GM12878 (cell line): ENCODE measurements at regions of chr9 and their contacts with region 1.

Region 1: DNA sequence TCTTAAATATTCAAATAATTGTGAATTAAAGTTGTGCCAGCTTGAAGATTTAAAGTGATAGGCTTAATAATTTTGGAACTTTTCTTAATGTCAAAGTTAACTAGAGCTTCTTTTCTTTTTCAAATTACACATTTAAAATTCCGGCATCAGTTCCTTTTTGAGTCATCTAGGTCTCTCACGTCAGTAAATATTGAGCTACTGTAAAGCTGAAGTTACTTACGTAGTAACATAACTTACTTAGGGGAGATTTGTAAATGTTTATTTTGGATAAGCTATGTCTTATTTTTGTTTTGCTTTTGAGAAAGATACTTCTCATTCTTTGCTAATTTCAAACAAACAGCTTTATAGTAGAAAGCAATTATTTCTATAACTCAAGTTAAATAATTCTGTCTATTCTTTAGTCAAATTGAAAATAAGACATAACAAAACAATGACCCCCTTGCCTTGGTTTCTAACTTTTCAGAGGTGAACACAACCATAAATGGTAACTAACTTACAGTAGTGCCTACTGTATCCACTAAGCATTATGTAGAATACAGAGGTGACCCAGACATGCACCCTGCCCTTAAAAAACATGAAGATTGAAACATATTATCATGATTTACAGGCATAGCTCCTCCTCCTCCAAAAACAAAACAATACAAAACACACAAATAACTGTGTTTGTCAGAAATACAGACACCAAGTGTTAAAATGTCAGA is 29.8 kb downstream of the CD274 start:
- DNase-seq: no peak
- ATAC-seq: peak; percentile 85
- H3K4me3 ChIP-seq: no peak overlapping the region
- H3K27ac ChIP-seq: peak overlapping the region; percentile 62
- H3K4me1 ChIP-seq: peaks cover 27% of the 10 kb centered on the region
- H3K27me3 ChIP-seq: no peaks in the 10 kb centered on the region
- CTCF ChIP-seq: no peak
- EP300 ChIP-seq: peak; percentile 37 to 47; a peak in 2 of 4 replicates
- POLR2A ChIP-seq: no peak
- RAD21 ChIP-seq: no peak

Region 2: DNA sequence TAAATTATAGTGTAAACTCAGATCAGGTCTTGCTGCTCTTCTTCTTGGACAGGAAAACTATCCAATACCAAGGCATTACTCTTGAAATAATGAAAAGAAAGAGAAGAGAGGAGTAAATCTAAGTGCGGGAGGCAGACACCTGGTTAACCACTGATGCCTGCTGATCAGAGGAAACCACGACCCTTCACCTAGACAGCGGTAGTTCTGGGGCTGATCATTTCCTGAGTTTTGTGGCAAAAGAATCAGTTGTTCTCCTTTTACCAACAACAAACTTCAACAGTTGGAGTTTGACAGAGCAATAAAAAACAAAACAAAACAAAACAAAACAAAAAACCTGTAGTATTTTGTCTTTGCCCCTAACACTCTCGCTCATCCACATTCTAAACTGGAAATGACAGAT is 143.5 kb before region 1 on chr9:
- CTCF ChIA-PET with region 1: no interaction called
- POLR2A ChIA-PET with region 1: no interaction called
- RAD21 ChIA-PET with region 1: no interaction called
- SMC1A ChIA-PET with region 1: no interaction called
- in situ Hi-C with region 1: no loop called
- intact Hi-C with region 1: no loop called
- DNase-seq: no peak
- ATAC-seq: no peak
- H3K4me3 ChIP-seq: no peak overlapping the region
- H3K27ac ChIP-seq: no peak overlapping the region
- H3K4me1 ChIP-seq: no peaks in the 10 kb centered on the region
- H3K27me3 ChIP-seq: no peaks in the 10 kb centered on the region
- CTCF ChIP-seq: no peak
- EP300 ChIP-seq: no peak
- POLR2A ChIP-seq: no peak
- RAD21 ChIP-seq: no peak

Region 3: DNA sequence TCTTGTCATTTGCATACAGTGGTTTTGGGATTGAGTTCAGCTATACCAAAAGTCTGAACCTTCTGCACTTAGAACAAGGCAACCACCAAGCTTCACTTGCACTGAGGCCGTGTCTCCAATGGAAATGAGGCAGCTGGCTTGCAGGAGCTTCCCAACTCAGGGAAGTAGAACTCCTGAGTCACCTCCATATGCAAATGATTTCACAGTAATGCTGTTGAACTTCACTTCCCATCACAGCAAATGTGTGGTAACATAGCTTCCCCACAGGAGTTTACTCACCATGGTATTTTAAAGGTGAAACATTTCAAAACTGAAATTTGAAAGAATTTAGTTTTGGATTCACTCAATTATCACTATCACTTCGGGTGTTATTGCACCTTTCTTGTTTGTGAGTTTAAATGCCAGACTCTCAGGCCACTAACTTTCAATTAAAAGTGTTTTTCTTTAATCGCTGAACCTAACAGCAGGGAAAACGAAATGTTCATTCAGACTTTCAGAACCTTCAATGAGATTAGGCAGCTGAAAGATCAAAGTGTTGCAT is 20.8 kb before region 1 on chr9:
- CTCF ChIA-PET with region 1: interaction called, 6 read pairs
- POLR2A ChIA-PET with region 1: interaction called, 10 read pairs
- RAD21 ChIA-PET with region 1: interaction called, 39 read pairs
- SMC1A ChIA-PET with region 1: interaction called, 47 read pairs
- in situ Hi-C with region 1: no loop called
- intact Hi-C with region 1: loop called (anchors 2 kb)
- DNase-seq: no peak
- ATAC-seq: peak; percentile 55
- H3K4me3 ChIP-seq: peak overlapping the region; percentile 35
- H3K27ac ChIP-seq: peak overlapping the region; percentile 81
- H3K4me1 ChIP-seq: peaks cover 32% of the 10 kb centered on the region
- H3K27me3 ChIP-seq: no peaks in the 10 kb centered on the region
- CTCF ChIP-seq: no peak
- EP300 ChIP-seq: peak; percentile 69 to 84; a peak in 2 of 4 replicates
- POLR2A ChIP-seq: no peak
- RAD21 ChIP-seq: no peak

Region 4: DNA sequence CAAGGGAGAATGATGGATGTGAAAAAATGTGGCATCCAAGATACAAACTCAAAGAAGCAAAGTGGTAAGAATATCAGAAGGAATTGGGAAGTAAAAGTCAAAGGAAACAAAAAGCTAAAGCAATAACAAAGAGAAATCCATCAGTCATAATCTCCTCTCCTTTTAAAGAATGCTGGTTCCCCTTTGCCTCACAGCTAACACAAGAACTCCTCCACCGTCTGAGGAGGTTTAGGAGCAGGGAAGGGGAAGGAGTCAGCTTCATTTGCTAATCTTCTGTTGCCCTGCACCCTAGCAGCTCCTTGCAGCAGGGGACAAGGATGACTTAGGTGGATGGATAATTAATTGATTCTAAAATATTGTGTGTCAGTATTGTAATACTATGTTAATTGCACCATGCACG is 13.4 kb before region 1 on chr9:
- CTCF ChIA-PET with region 1: interaction called, 7 read pairs
- POLR2A ChIA-PET with region 1: interaction called, 3 read pairs
- RAD21 ChIA-PET with region 1: interaction called, 39 read pairs
- SMC1A ChIA-PET with region 1: interaction called, 47 read pairs
- in situ Hi-C with region 1: no loop called
- intact Hi-C with region 1: no loop called
- DNase-seq: no peak
- ATAC-seq: no peak
- H3K4me3 ChIP-seq: no peak overlapping the region
- H3K27ac ChIP-seq: no peak overlapping the region
- H3K4me1 ChIP-seq: peaks cover 26% of the 10 kb centered on the region
- H3K27me3 ChIP-seq: no peaks in the 10 kb centered on the region
- CTCF ChIP-seq: no peak
- EP300 ChIP-seq: no peak
- POLR2A ChIP-seq: no peak
- RAD21 ChIP-seq: no peak

Region 5: DNA sequence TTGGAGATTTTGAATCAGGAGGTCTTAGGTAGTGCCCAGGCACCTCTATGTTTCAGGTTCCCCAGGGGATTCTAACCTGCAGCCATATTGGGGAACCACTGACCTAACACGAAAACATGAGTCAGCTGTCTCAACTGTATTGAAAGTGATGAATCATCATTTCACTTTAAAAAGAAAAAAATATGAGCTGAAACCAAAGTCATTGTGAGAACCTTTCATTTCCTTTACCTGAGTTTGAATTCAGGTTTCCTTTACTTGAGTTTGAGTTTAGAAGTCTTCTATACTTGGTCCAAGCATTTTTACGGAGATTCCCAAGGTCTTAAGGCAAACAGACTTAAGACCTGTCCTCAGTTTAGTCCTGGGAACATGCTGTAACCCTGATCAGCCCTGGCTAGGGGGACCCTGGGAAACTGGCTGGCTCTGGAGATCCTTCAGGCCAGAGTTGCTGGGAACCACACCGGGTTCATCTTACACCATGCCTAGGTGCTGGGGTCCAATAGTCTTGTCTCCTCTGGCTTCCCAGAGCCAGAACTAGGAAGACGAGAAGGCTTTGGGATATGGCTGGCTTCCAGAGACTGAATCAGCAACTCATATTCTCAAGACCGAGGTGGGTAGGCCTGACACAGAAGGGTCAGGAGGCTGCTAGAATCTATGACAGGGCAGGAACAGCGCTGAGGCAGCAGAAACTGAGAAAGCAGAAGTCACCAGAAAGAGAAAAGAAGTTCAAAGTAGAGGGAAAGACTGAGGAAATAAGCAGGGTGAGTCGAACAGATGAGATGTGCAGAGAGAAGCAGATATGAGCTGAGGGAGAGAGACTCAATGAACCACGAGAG is 13.8 kb after region 1 on chr9:
- CTCF ChIA-PET with region 1: interaction called, 14 read pairs
- POLR2A ChIA-PET with region 1: interaction called, 11 read pairs
- RAD21 ChIA-PET with region 1: interaction called, 47 read pairs
- SMC1A ChIA-PET with region 1: interaction called, 64 read pairs
- in situ Hi-C with region 1: no loop called
- intact Hi-C with region 1: loop called (anchors 1 kb)
- DNase-seq: peak; percentile 96
- ATAC-seq: peak; percentile 91
- H3K4me3 ChIP-seq: peak overlapping the region; percentile 30; the same call in 1 of the 2 replicates
- H3K27ac ChIP-seq: peak overlapping the region; percentile 92
- H3K4me1 ChIP-seq: peaks cover 16% of the 10 kb centered on the region
- H3K27me3 ChIP-seq: no peaks in the 10 kb centered on the region
- CTCF ChIP-seq: no peak
- EP300 ChIP-seq: peak in 1 of 2 experiments; percentile 65; a peak in 1 of 4 replicates
- POLR2A ChIP-seq: peak; percentile 63
- RAD21 ChIP-seq: 0 out of 2 replicates have a peak, but pooled peaks have one; percentile 9

Region 6: GRCh38 chr9:5518171-5518936 is 38.2 kb after region 1 on chr9:
- CTCF ChIA-PET with region 1: interaction called, 3 read pairs
- POLR2A ChIA-PET with region 1: interaction called, 16 read pairs
- RAD21 ChIA-PET with region 1: interaction called, 35 read pairs
- SMC1A ChIA-PET with region 1: interaction called, 87 read pairs
- in situ Hi-C with region 1: no loop called
- intact Hi-C with region 1: loop called (anchors 2 kb)
- DNase-seq: no peak
- ATAC-seq: peak; percentile 49
- H3K4me3 ChIP-seq: peak overlapping the region; percentile 35; the same call in 1 of the 2 replicates
- H3K27ac ChIP-seq: peak overlapping the region; percentile 58
- H3K4me1 ChIP-seq: peaks cover 47% of the 10 kb centered on the region
- H3K27me3 ChIP-seq: no peaks in the 10 kb centered on the region
- CTCF ChIP-seq: no peak
- EP300 ChIP-seq: no peak
- POLR2A ChIP-seq: no peak
- RAD21 ChIP-seq: 0 out of 2 replicates have a peak, but pooled peaks have one; percentile 17